Calu3 (cell line): ENCODE measurements at regions of chr7 and their contacts with region 1.

Region 1: GRCh38 chr7:5997222-5997808 is 11.5 kb downstream of the PMS2 start:
- DNase-seq: peak; percentile 67
- H3K4me3 Mint-ChIP-seq: no peak overlapping the region
- H3K27ac Mint-ChIP-seq: no peak overlapping the region
- H3K4me1 Mint-ChIP-seq: peaks cover 15% of the 10 kb centered on the region
- H3K27me3 Mint-ChIP-seq: no peaks in the 10 kb centered on the region
- CTCF ChIP-seq: peak; percentile 36

Region 2: GRCh38 chr7:6008668-6009611 is 11.6 kb after region 1 on chr7 and contains the starts of genes AIMP2 and PMS2:
- CTCF ChIA-PET with region 1: interaction called, 22 read pairs
- intact Hi-C with region 1: no loop called
- DNase-seq: peak; percentile 99
- H3K4me3 Mint-ChIP-seq: peak within 1 kb of the TSS; percentile 90
- H3K27ac Mint-ChIP-seq: peak within 1 kb of the TSS; percentile 74
- H3K4me1 Mint-ChIP-seq: peaks cover 54% of the 10 kb centered on the region
- H3K27me3 Mint-ChIP-seq: no peaks in the 10 kb centered on the region
- CTCF ChIP-seq: no peak
- total RNA-seq, gene AIMP2: 74.2 and 85.9 TPM in 2 replicates
- total RNA-seq, gene PMS2: 32.6 and 33.2 TPM in 2 replicates

Region 3: GRCh38 chr7:6106140-6106904 is 109.0 kb after region 1 on chr7:
- CTCF ChIA-PET with region 1: interaction called, 17 read pairs
- intact Hi-C with region 1: loop called (anchors 1 kb)
- DNase-seq: peak; percentile 56
- H3K4me3 Mint-ChIP-seq: peak overlapping the region; percentile 87
- H3K27ac Mint-ChIP-seq: peak overlapping the region; percentile 68
- H3K4me1 Mint-ChIP-seq: peaks cover 36% of the 10 kb centered on the region
- H3K27me3 Mint-ChIP-seq: no peaks in the 10 kb centered on the region
- CTCF ChIP-seq: no peak

Region 4: GRCh38 chr7:6323967-6324701 is 326.8 kb after region 1 on chr7:
- CTCF ChIA-PET with region 1: no interaction called
- intact Hi-C with region 1: loop called (anchors 5 kb)
- DNase-seq: no peak
- H3K4me3 Mint-ChIP-seq: no peak overlapping the region
- H3K27ac Mint-ChIP-seq: no peak overlapping the region
- H3K4me1 Mint-ChIP-seq: peaks cover 8% of the 10 kb centered on the region
- H3K27me3 Mint-ChIP-seq: no peaks in the 10 kb centered on the region
- CTCF ChIP-seq: no peak

Region 5: DNA sequence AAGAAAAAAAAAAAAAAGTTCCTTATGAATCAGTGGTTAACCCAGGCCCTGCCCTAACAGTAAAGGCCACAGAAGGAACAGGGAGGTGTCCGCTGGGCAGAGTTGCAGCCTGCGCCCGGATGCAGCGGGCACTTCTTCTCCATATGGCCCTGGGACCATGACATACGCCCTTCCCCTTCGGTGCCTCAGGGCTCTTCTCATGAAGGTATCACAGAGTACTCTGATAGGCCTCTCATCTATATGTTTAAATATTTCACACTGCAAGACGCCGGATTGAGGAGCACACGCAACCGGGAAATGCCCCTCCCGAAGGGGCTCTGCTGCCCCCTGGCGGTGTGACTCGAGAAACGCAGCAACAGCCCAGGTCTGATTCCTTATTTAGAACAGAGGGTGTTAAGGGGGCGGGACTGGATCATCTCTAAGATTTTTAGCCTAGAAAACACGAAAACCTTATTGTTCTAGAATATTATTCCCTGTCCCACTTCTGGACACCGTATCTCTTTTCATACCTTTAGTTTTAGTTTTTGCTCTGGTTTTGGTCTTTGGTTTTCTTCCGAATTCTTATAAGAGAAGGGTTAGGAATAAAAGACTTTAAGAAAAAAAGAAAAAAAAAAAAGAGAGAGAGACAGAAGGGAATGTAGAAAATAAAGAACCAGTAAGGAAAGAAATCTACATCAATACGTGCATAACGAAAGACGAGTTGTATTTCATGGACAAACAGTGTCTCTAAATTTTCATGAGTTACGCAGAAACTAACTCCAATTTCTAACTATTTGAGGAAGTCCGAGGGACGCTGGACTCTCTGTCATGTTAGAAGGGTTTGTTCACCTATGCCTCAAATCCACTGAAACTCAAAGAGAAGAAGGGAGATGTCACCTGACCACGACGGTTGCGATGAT is 438.4 kb after region 1 on chr7:
- CTCF ChIA-PET with region 1: no interaction called
- intact Hi-C with region 1: loop called (anchors 5 kb)
- DNase-seq: peak; percentile 95
- H3K4me3 Mint-ChIP-seq: no peak overlapping the region
- H3K27ac Mint-ChIP-seq: no peak overlapping the region
- H3K4me1 Mint-ChIP-seq: peaks cover 27% of the 10 kb centered on the region
- H3K27me3 Mint-ChIP-seq: no peaks in the 10 kb centered on the region
- CTCF ChIP-seq: peak; percentile 98